PC-9 (cell line): ENCODE measurements at regions of chr16 and their contacts with region 1.

Region 1: DNA sequence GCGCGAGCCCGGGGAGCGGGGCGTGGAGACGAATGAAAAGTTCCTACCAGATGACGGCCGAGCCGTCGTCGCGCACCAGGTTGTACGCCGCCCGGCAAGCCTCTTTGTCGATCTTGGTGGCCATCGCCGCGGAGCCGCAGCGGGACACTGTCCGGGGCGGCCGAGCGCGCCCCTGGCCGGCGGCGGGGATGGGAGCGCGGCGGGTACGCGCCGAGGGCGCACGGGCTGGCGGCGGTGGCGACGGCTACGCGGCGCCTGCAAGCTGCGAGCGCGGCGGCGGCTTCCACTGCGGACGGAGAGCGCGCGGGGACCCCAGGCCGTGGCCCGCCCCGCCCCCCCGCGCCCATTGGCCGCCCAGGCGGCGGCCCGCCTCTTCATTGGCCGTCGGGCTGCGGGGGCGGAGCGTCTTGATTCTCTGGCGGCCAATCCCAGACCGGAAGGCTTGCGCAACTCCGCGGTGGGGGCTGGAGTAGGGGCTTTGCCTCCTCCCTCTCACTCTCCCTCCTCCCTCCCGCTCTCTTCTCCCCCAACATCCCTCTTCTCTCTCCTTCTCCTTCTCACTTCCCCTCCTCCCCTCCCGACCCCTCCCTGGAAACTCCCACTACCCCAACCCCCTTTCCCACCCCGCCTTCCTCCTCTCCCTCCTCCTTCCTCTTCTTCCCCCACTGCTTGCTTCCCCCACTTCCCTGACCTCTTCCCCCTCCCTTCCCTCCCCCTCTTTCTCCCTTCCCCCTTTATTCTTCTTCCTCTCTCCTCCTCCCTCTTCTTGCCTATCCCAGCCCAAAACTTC is at the start of gene COTL1:
- DNase-seq: peak; percentile 88 to 97
- H3K4me3 ChIP-seq: peak within 1 kb of the TSS; percentile 74
- H3K27ac ChIP-seq: peak within 1 kb of the TSS; percentile 97
- H3K4me1 ChIP-seq: peaks cover 49% of the 10 kb centered on the region
- H3K27me3 ChIP-seq: no peaks in the 10 kb centered on the region
- CTCF ChIP-seq: no peak
- total RNA-seq, gene COTL1: 458 and 512 TPM in 2 replicates

Region 2: DNA sequence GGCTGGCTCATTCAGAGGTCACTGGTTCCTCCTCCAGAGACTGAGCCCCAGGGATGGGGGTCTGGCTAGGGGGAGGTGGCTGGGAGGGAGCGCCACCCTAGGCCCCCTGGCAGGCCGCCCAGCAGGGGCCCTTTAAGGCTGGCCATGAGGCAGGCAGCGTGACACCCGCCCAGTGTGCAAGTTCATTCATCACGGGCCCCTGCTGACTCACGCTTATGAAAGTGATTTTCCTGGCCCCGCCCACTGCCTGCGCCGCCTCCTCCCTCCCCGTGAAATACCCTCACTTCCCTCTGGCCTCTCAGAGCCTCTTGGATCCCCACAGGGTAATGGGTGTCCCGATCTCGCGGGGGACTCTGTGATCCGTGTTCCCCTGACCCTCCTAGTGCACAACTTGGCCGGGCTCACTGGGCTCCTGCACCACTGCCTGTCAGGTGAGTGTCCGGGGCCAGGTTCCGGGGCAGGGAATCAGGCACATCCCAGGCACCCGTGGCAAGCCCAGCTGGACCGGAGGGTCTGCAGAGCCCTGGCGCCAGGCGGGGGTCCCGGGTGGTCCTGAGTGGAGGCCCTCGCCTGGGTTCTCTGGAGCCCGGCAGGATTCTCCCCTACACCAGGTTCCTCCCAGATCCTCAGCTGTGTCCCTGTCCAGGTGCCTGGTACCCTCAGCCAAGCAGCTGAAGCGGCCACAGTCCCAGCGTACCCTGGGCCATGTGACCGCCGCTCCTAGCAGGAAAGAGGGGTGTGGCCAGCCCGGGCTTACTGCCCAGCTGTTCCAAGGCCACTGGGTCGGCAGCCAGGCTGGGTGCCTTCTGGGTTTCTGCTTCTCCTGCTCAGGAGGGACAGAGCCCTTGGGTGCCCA is 664.8 kb before region 1 on chr16 and contains the start of gene OSGIN1:
- CTCF ChIA-PET with region 1: no interaction called
- POLR2A ChIA-PET with region 1: no interaction called
- intact Hi-C with region 1: loop called (anchors 5 kb)
- DNase-seq: peak; percentile 82 to 93
- H3K4me3 ChIP-seq: peak within 1 kb of the TSS; percentile 87
- H3K27ac ChIP-seq: peak within 1 kb of the TSS; percentile 91
- H3K4me1 ChIP-seq: peaks cover 22% of the 10 kb centered on the region
- H3K27me3 ChIP-seq: no peaks in the 10 kb centered on the region
- CTCF ChIP-seq: no peak
- total RNA-seq, gene OSGIN1: 41.3 and 44.8 TPM in 2 replicates

Region 3: GRCh38 chr16:84260766-84261554 is 357.0 kb before region 1 on chr16:
- CTCF ChIA-PET with region 1: no interaction called
- POLR2A ChIA-PET with region 1: no interaction called
- intact Hi-C with region 1: no loop called
- DNase-seq: no peak
- H3K4me3 ChIP-seq: no peak overlapping the region
- H3K27ac ChIP-seq: no peak overlapping the region
- H3K4me1 ChIP-seq: no peaks in the 10 kb centered on the region
- H3K27me3 ChIP-seq: no peaks in the 10 kb centered on the region
- CTCF ChIP-seq: no peak

Region 4: DNA sequence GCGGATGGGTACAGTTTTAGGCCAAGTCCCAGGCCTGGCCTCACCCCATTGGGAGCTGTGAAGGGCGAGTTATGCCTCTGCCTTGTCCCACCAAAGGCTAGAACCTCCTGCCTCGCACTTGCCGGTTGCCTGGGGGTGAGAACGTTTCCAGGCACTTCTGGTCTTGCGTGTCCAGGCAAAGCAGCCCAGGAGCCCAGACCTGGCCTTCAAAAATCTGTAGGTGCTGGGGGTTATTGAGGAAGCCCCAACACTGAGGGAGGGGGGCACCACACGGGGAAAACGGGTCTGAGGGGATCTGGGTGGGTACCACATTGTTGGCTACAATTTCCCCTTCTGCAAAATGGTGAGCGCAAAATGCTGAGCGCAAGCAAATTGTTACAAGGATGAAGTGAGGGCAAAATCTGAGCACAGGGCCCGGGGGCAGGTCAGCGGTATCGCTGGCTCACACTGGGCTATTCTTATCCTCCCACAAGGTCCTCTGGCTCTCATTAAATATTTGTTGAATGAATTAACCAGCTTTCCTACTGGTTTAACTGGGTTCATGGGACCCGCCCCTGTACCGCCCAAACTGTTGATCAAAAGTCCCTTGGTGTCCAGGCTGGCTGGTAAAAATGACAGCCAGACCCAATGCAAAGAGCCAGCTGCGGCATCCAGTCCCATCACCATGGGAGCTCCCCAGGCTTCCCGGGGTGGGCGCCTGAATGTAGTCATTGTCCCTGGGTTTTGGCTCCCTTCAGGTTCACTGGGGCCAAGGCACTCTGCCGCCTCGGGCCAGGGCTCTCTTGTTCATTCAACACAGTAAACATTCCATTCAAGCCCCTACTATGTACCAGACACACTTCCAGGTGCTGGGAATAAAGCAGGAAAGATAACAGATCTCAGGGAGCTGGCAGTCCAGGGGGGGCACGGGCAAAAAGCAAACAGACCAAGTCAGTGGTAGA is 261.5 kb before region 1 on chr16:
- CTCF ChIA-PET with region 1: no interaction called
- POLR2A ChIA-PET with region 1: no interaction called
- intact Hi-C with region 1: loop called (anchors 1 kb)
- DNase-seq: peak; percentile 60 to 91
- H3K4me3 ChIP-seq: peak overlapping the region; percentile 28; the same call in 1 of the 2 replicates
- H3K27ac ChIP-seq: peak overlapping the region; percentile 83
- H3K4me1 ChIP-seq: peaks cover 58% of the 10 kb centered on the region
- H3K27me3 ChIP-seq: no peaks in the 10 kb centered on the region
- CTCF ChIP-seq: no peak

Region 5: GRCh38 chr16:84563786-84564405 is 54.1 kb before region 1 on chr16:
- CTCF ChIA-PET with region 1: interaction called, 14 read pairs
- POLR2A ChIA-PET with region 1: no interaction called
- intact Hi-C with region 1: no loop called
- DNase-seq: no peak
- H3K4me3 ChIP-seq: no peak overlapping the region
- H3K27ac ChIP-seq: no peak overlapping the region
- H3K4me1 ChIP-seq: 0 out of 2 replicates have a peak, but pooled peaks cover 8% of the 10 kb centered on the region
- H3K27me3 ChIP-seq: no peaks in the 10 kb centered on the region
- CTCF ChIP-seq: no peak

Region 6: GRCh38 chr16:84726079-84726668 is 108.2 kb after region 1 on chr16:
- CTCF ChIA-PET with region 1: interaction called, 5 read pairs
- POLR2A ChIA-PET with region 1: no interaction called
- intact Hi-C with region 1: loop called (anchors 1 kb)
- DNase-seq: peak; percentile 90 to 91
- H3K4me3 ChIP-seq: peak overlapping the region; percentile 23; the same call in 1 of the 2 replicates
- H3K27ac ChIP-seq: peak overlapping the region; percentile 84
- H3K4me1 ChIP-seq: peaks cover 84% of the 10 kb centered on the region
- H3K27me3 ChIP-seq: no peaks in the 10 kb centered on the region
- CTCF ChIP-seq: peak; percentile 98

Region 7: GRCh38 chr16:85187447-85187846 is 569.5 kb after region 1 on chr16:
- CTCF ChIA-PET with region 1: no interaction called
- POLR2A ChIA-PET with region 1: interaction called, 12 read pairs
- intact Hi-C with region 1: no loop called
- DNase-seq: no peak
- H3K4me3 ChIP-seq: no peak overlapping the region
- H3K27ac ChIP-seq: no peak overlapping the region
- H3K4me1 ChIP-seq: no peaks in the 10 kb centered on the region
- H3K27me3 ChIP-seq: no peaks in the 10 kb centered on the region
- CTCF ChIP-seq: no peak